ENCODE measurements at regions of chr10 and their contacts with region 1.

Region 1: DNA sequence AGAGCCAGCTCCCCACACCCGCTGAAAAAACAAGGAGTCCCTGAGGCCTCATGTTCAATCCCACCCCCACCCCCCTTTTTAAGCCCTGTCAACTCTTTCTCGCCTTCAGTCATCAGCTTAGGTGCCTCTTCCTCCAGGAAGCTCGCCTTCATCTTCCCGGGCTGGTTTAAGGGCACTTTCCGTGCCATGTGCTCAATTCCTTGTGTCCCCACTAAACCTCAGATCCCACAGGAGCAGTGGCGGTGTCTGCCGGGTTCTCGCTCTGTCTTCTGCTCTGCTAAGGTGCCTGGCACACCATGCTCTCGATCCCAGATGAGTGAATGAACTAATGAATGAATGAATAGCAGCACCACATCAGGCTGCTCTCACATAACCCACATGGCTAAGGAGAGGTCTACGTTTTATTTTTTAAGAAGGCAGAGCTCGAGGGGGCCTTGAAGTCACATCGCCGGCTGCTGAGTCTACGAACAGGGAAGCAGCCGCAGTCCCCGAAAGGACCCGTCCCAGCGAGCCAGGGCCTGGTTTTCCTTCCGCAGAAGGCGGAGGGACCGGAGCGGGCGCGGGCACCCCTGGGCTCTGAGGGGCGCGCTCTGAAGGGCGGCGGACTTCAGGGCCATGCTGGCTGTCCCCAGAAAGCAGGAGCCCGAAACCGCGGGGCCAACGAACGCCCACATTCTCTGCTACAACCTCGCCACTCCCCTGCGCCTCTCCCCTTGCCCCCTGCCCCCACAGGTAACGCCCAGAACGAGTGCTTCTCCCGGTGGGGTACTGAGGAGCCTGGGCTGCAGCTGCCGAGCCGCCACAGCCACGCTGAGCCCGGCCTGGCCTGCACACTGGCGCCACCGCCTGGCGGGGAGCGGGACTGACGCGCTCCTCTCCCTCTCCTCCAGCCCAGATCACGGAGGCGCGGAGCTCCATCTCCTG is 73.4 kb upstream of the KCNMA1 start:
- DNase-seq: peak; percentile 73
- ATAC-seq: peak; percentile 94
- H3K4me3 ChIP-seq: peak overlapping the region in 4 of 5 experiments; percentile 26 to 50 (median 35)
- H3K4me3 Mint-ChIP-seq: peak overlapping the region; percentile 79
- H3K27ac ChIP-seq: no peak overlapping the region
- H3K27ac Mint-ChIP-seq: no peak overlapping the region
- H3K4me1 ChIP-seq: peaks cover 7 to 17% of the 10 kb centered on the region in 2 donors
- H3K4me1 Mint-ChIP-seq: peaks cover 15% of the 10 kb centered on the region
- H3K27me3 ChIP-seq: peaks cover 0 to 13% (median 3%) of the 10 kb centered on the region in 4 experiments
- H3K27me3 Mint-ChIP-seq: peaks cover 24% of the 10 kb centered on the region
- CTCF ChIP-seq: peak; percentile 97

Region 2: GRCh38 chr10:77165445-77166208 is 545.4 kb before region 1 on chr10:
- CTCF ChIA-PET with region 1: interaction called, 13 read pairs
- POLR2A ChIA-PET with region 1: interaction called, 3 read pairs
- intact Hi-C with region 1: loop called (anchors 2 kb)
- DNase-seq: peak; percentile 58
- ATAC-seq: peak; percentile 51
- H3K4me3 ChIP-seq: no peak overlapping the region
- H3K4me3 Mint-ChIP-seq: peak overlapping the region; percentile 44
- H3K27ac ChIP-seq: no peak overlapping the region
- H3K27ac Mint-ChIP-seq: no peak overlapping the region
- H3K4me1 ChIP-seq: no peaks in the 10 kb centered on the region
- H3K4me1 Mint-ChIP-seq: peaks cover 2% of the 10 kb centered on the region
- H3K27me3 ChIP-seq: peaks cover 0 to 9% (median 0%) of the 10 kb centered on the region in 4 experiments
- H3K27me3 Mint-ChIP-seq: peaks cover 20% of the 10 kb centered on the region
- CTCF ChIP-seq: peak; percentile 89

Region 3: GRCh38 chr10:77173615-77174461 is 537.2 kb before region 1 on chr10:
- CTCF ChIA-PET with region 1: interaction called, 46 read pairs
- POLR2A ChIA-PET with region 1: no interaction called
- intact Hi-C with region 1: loop called (anchors 1 kb)
- DNase-seq: peak; percentile 77
- ATAC-seq: no peak
- H3K4me3 ChIP-seq: no peak overlapping the region
- H3K4me3 Mint-ChIP-seq: no peak overlapping the region
- H3K27ac ChIP-seq: no peak overlapping the region
- H3K27ac Mint-ChIP-seq: no peak overlapping the region
- H3K4me1 ChIP-seq: peaks cover 0 to 6% of the 10 kb centered on the region in 2 donors
- H3K4me1 Mint-ChIP-seq: peaks cover 2% of the 10 kb centered on the region
- H3K27me3 ChIP-seq: peaks cover 0 to 5% (median 0%) of the 10 kb centered on the region in 4 experiments
- H3K27me3 Mint-ChIP-seq: peaks cover 4% of the 10 kb centered on the region
- CTCF ChIP-seq: peak; percentile 98

Region 4: GRCh38 chr10:77699080-77699645 is 11.9 kb before region 1 on chr10:
- CTCF ChIA-PET with region 1: interaction called, 28 read pairs
- POLR2A ChIA-PET with region 1: no interaction called
- intact Hi-C with region 1: no loop called
- DNase-seq: no peak
- ATAC-seq: no peak
- H3K4me3 ChIP-seq: no peak overlapping the region
- H3K4me3 Mint-ChIP-seq: no peak overlapping the region
- H3K27ac ChIP-seq: no peak overlapping the region
- H3K27ac Mint-ChIP-seq: no peak overlapping the region
- H3K4me1 ChIP-seq: peaks cover 0 to 10% of the 10 kb centered on the region in 2 donors
- H3K4me1 Mint-ChIP-seq: peaks cover 15% of the 10 kb centered on the region
- H3K27me3 ChIP-seq: no peaks in the 10 kb centered on the region
- H3K27me3 Mint-ChIP-seq: no peaks in the 10 kb centered on the region
- CTCF ChIP-seq: no peak

Measured in B cell (primary cell).